H1 (cell line): ENCODE measurements at regions of chr11 and their contacts with region 1.

Region 1: GRCh38 chr11:10488581-10489443 is 33.7 kb downstream of the AMPD3 start:
- DNase-seq: no peak
- H3K4me3 ChIP-seq: no peak overlapping the region
- H3K27ac ChIP-seq: no peak overlapping the region
- H3K4me1 ChIP-seq: peaks cover 0 to 5% (median under 1%) of the 10 kb centered on the region in 4 experiments; a peak in 3 of 7 replicates
- H3K27me3 ChIP-seq: no peaks in the 10 kb centered on the region; a peak in 1 of 7 replicates
- CTCF ChIP-seq: no peak
- EP300 ChIP-seq: no peak
- POLR2A ChIP-seq: no peak
- RAD21 ChIP-seq: no peak

Region 2: DNA sequence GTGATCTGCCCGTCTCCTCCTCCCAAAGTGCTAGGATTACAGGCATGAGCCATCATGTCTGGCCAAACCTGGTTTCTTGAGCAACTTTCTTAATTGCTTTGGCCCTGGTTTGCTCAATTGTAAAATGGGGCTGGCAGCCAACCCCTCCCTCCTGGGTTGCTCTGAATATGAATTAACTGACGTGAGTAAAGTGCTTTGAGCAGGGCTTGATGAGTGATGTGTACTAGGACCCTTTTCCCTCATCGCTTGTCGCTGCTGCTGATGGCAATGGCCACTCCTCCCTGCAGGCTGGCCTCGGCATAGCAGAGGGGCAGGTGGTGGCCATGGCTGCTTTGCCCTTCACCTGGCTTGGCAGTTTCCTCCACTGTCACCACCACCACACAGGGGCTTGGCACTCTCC is 10.6 kb after region 1 on chr11:
- CTCF ChIA-PET with region 1: interaction called, 16 read pairs
- POLR2A ChIA-PET with region 1: interaction called, 5 read pairs
- DNase-seq: no peak
- H3K4me3 ChIP-seq: no peak overlapping the region
- H3K27ac ChIP-seq: no peak overlapping the region
- H3K4me1 ChIP-seq: 0 out of 7 replicates have a peak, but pooled peaks cover 0 to 3% (median 0%) of the 10 kb centered on the region in 4 experiments
- H3K27me3 ChIP-seq: no peaks in the 10 kb centered on the region; a peak in 1 of 7 replicates
- CTCF ChIP-seq: no peak
- EP300 ChIP-seq: no peak
- POLR2A ChIP-seq: no peak
- RAD21 ChIP-seq: no peak

Region 3: GRCh38 chr11:10735481-10736475 is 247.0 kb after region 1 on chr11:
- CTCF ChIA-PET with region 1: no interaction called
- POLR2A ChIA-PET with region 1: no interaction called
- DNase-seq: peak; percentile 90 to 98
- H3K4me3 ChIP-seq: peak overlapping the region in 1 of 4 experiments; percentile 47; a peak in 4 of 8 replicates
- H3K27ac ChIP-seq: no peak overlapping the region
- H3K4me1 ChIP-seq: peaks cover 0 to 4% (median 3%) of the 10 kb centered on the region in 4 experiments; a peak in 4 of 7 replicates
- H3K27me3 ChIP-seq: no peaks in the 10 kb centered on the region; a peak in 1 of 7 replicates
- CTCF ChIP-seq: peak; percentile 85 to 95 (median 93)
- EP300 ChIP-seq: no peak; a peak in 1 of 3 replicates
- POLR2A ChIP-seq: 0 out of 3 replicates have a peak, but pooled peaks of 1 of the 2 experiments have one; percentile 23
- RAD21 ChIP-seq: peak; percentile 99